ENCODE measurements at regions of chr2 and their contacts with region 1.

Region 1: DNA sequence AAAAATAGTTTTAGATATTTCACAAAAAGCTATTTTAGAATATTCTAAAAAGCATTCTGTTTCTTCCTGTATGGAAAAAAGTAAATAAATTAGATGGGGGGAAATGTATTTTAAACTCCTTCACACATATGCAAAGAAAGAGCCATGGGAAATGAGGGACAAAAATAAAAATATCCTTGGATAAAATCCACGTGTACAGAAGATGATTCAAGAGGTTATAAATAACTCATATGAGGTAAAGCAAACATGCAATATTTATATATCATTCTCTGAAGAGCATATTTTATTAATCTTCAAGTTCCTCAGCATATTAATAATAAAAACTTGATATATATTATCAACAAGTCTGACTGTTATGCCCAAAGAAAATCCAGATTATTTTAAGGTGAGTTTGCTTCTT is 8.8 kb upstream of the GFPT1 start:
- DNase-seq: no peak
- ATAC-seq: peak in 3 of 4 donors; percentile 42 to 72 (median 63)
- H3K4me3 ChIP-seq: no peak overlapping the region
- H3K27ac ChIP-seq: peak overlapping the region in 11 of 12 donors; percentile 14 to 76 (median 60)
- H3K4me1 ChIP-seq: peaks cover 0 to 21% (median 5%) of the 10 kb centered on the region in 12 donors
- H3K27me3 ChIP-seq: no peaks in the 10 kb centered on the region
- CTCF ChIP-seq: no peak
- POLR2A ChIP-seq: no peak

Region 2: GRCh38 chr2:69335311-69335710 is 60.6 kb before region 1 on chr2:
- intact Hi-C with region 1: loop called in 1 of 10 experiments (anchors 2 kb)
- DNase-seq: no peak
- ATAC-seq: no peak
- H3K4me3 ChIP-seq: no peak overlapping the region
- H3K27ac ChIP-seq: no peak overlapping the region
- H3K4me1 ChIP-seq: peaks cover 0 to 2% (median 0%) of the 10 kb centered on the region in 12 donors
- H3K27me3 ChIP-seq: no peaks in the 10 kb centered on the region
- CTCF ChIP-seq: no peak
- POLR2A ChIP-seq: no peak

Region 3: GRCh38 chr2:69436938-69437750 is 41.3 kb after region 1 on chr2 and contains the start of gene NFU1:
- intact Hi-C with region 1: loop called in 1 of 10 experiments (anchors 5 kb)
- DNase-seq: peak; percentile 94 to 97 (median 96)
- ATAC-seq: peak; percentile 97 to 99 (median 98)
- H3K4me3 ChIP-seq: peak within 1 kb of the TSS; percentile 70 to 97 (median 84)
- H3K27ac ChIP-seq: peak within 1 kb of the TSS; percentile 84 to 99 (median 96)
- H3K4me1 ChIP-seq: peaks cover 5 to 37% (median 21%) of the 10 kb centered on the region in 12 donors
- H3K27me3 ChIP-seq: no peaks in the 10 kb centered on the region
- CTCF ChIP-seq: peak; percentile 62 to 82 (median 75)
- POLR2A ChIP-seq: peak in 1 of 2 donors; percentile 84
- total RNA-seq, gene NFU1: 76.6 to 144 (median 110) TPM

Region 4: GRCh38 chr2:69581774-69582581 is 186.1 kb after region 1 on chr2:
- intact Hi-C with region 1: no loop called
- DNase-seq: peak in 2 of 5 donors; percentile 20 to 43
- ATAC-seq: peak in 2 of 4 donors; percentile 13 to 15
- H3K4me3 ChIP-seq: peak overlapping the region in 10 of 12 donors; percentile 9 to 46 (median 39)
- H3K27ac ChIP-seq: peak overlapping the region; percentile 38 to 84 (median 74)
- H3K4me1 ChIP-seq: peaks cover 5 to 96% (median 64%) of the 10 kb centered on the region in 12 donors
- H3K27me3 ChIP-seq: no peaks in the 10 kb centered on the region
- CTCF ChIP-seq: no peak
- POLR2A ChIP-seq: no peak

Measured in heart left ventricle (tissue), 16 donors.